OCI-LY7 (cell line): ENCODE measurements at regions of chr14 and their contacts with region 1.

Region 1: DNA sequence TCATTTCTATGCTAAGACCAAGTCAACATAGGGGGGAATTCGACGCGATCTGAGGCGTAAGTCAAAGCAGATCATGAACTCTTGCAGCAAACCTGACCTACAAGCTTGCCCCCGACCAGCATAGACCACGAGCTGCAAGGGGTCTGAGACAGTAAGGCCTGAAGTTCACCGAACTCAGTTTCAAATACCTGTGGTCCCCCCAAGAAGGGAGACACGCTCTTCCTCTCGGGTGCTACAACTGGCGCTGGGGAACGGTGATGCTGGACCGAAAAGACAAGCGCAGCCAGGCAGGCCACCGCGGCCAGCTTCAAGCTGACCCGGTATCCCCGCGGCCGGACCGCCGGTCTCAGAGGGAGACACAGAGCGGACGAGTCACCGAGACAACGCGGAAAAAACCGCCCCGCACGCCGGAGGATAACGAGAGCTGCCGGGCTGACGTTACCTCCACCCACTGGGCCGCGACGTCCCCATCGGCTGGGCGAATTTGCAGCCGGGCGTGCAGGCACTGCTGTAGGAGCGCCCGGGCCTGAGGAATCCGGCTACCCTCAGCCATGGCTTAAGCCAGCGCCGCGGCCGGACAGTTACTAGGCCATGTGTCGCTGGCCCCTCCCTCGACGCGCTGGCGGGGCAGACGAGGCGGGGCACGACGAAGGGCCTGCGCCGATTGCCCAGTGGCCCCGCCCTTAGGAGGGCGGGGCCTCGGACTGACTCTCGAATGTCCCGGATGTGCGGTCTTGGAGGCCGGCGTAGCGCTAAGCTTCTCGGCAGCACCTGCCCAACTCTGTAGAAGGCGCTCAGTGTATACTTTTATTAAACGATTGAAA is at the start of gene DTD2:
- DNase-seq: peak; percentile 97
- H3K4me3 ChIP-seq: peak within 1 kb of the TSS; percentile 81
- H3K27ac ChIP-seq: peak within 1 kb of the TSS; percentile 56
- H3K4me1 ChIP-seq: peaks cover 17% of the 10 kb centered on the region
- CTCF ChIP-seq: peak; percentile 50
- total RNA-seq, gene DTD2: 48.9 and 61.4 TPM in 2 replicates

Region 2: GRCh38 chr14:31026395-31027118 is 430.5 kb before region 1 on chr14:
- CTCF ChIA-PET with region 1: no interaction called
- POLR2A ChIA-PET with region 1: no interaction called
- intact Hi-C with region 1: no loop called
- DNase-seq: peak; percentile 95
- H3K4me3 ChIP-seq: peak overlapping the region; percentile 98
- H3K27ac ChIP-seq: peak overlapping the region; percentile 76
- H3K4me1 ChIP-seq: peaks cover 25% of the 10 kb centered on the region
- CTCF ChIP-seq: no peak

Region 3: DNA sequence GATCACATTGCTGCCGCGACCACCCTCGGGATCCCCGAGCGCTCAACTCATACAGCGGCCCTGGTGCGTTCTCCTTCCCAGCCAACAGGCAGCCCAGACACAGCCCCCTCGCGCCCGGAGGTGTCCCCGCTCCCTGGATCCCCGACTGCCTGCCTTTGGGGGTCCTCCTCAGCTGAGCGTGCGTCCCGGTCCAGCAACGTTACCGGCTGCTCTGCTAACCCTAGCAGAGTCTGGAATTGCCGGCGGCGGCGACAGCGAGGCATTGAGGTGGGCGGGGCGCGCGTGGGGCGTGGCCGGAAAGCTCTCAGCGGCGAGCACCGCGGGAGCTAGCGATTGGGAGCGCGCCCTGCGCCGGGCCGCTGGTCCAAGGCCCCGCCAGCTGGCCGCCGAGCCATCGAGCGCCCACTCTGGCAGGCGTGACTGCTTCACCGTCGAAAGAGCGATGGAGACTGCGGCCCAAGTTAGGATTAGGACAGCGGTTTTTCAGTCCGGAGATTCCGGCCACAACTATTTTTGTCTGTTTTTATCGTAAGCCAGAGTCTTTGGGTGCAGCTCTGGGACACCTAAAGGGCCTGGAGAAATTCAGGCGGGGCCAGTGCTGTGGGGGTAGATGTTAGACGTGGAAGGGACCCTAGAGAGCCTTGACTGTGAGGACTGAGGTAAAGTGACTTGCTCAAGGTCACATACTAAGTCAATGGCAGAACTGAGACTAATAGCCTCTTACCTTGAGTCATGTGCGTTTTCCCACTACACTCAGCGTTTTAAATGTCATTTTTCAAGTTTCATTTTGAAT is 36.5 kb before region 1 on chr14 and contains the start of gene HEATR5A:
- CTCF ChIA-PET with region 1: interaction called, 5 read pairs
- POLR2A ChIA-PET with region 1: interaction called, 19 read pairs
- intact Hi-C with region 1: loop called (anchors 1 kb)
- DNase-seq: peak; percentile 95
- H3K4me3 ChIP-seq: peak within 1 kb of the TSS; percentile 79
- H3K27ac ChIP-seq: peak within 1 kb of the TSS; percentile 36
- H3K4me1 ChIP-seq: peaks cover 16% of the 10 kb centered on the region
- CTCF ChIP-seq: peak; percentile 54
- total RNA-seq, gene HEATR5A: 12.0 and 13.7 TPM in 2 replicates

Region 4: DNA sequence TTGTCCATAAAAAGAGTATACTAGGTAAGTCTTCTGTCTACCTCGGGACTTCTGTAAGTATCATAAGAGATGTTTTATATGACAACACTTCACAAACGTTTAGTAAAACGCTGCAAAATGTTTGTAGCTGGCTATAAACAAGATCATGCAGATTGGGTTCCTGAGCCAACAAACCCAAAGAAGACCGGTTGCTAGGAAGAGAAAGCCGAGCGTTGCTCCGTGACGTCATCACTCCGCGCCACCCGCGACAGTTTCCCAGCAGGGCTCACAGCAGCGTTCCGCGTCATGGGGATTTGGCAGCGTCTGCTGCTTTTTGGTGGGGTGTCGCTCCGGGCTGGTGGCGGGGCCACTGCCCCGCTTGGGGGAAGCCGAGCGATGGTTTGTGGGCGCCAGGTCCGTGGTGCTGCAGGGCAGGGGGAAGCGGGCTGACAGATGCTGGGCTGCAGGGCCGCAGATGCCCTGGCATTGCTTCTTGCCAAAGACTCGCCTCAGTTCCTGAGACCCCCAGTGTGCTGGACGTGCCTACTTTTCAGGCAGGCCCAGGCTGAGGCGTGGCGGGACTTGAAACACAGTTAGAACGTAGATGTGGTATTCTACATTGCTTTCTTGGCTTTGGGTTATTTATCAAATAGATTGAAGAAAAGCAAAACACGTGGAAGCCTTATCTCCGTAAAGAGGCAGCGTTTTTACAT is 104.2 kb after region 1 on chr14 and contains the start of gene NUBPL:
- CTCF ChIA-PET with region 1: no interaction called
- POLR2A ChIA-PET with region 1: no interaction called
- intact Hi-C with region 1: loop called (anchors 2 kb)
- DNase-seq: peak; percentile 95
- H3K4me3 ChIP-seq: peak within 1 kb of the TSS; percentile 87
- H3K27ac ChIP-seq: peak within 1 kb of the TSS; percentile 38
- H3K4me1 ChIP-seq: peaks cover 5% of the 10 kb centered on the region
- CTCF ChIP-seq: no peak
- total RNA-seq, gene NUBPL: 9.0 and 15.1 TPM in 2 replicates